CD4-positive, alpha-beta memory T cell (primary cell): ENCODE measurements at regions of chr7 and their contacts with region 1.

Region 1: DNA sequence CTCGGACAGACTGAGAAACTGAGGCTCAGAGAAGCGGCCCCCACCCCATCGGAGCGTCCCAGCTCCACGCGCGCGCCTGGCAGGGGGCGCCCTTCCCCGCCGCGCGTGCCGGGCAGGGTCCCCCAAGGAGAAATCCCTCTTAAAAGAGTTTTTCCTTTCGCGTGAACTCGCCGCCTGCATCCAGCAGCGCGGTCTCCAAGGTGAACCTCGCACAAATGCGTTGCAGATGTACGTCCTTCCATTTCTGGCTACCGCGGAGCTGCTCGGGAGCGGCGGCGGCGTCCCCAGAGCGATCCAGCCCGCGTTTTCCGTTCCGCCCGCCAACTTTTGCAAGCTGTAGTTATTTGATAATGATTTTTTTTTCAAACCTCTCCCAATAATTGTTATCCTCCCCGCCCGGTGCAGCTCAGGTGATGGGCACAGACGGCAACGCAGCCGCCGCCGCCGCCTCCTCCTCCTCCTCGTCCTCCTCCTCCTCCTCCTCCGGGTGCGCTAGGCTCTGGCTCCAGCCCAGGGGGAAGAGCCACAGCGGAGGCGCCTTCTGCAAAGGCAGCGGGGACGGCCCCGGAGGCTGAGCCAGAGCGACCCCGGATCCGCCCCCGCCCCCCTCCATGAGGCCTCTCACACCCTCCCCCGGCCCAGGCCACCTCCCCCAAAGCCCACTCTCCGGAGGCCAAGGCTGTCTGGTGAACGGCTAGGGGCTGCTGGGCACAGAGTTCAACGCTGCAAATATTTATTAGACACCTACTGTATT is 74.0 kb upstream of the CUX1 start:
- DNase-seq: peak; percentile 67 to 74 (median 70)
- H3K4me3 ChIP-seq: peak overlapping the region; percentile 17 to 49
- H3K4me3 Mint-ChIP-seq: peak overlapping the region; percentile 58 to 86 (median 80)
- H3K27ac ChIP-seq: no peak overlapping the region
- H3K27ac Mint-ChIP-seq: peak overlapping the region in 1 of 7 donors; percentile 70
- H3K4me1 ChIP-seq: peaks cover 14% of the 10 kb centered on the region
- H3K4me1 Mint-ChIP-seq: peaks cover 2 to 10% (median 6%) of the 10 kb centered on the region in 4 donors
- H3K27me3 ChIP-seq: no peaks in the 10 kb centered on the region
- H3K27me3 Mint-ChIP-seq: peaks cover 0 to 1% of the 10 kb centered on the region in 2 donors

Region 2: DNA sequence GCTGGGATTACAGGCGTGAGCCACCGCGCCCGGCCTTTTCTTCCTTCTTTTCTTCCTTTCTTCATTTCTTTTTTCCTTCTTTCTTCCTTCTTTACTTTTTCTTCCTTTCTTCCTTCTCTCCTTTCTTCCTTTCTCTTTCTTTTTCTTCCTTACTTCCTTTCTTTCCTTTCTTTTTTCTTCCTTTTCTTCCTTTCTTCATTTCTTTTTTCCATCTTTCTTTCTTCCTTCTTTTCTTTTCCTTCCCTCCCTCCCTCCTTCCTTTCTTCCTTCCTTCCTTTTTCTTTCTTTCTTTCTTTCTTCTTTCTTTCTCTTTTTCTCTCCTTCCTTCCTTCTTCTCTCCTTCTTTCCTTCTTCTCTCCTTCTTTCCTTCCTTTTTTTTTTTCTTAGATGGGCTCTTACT is 27.0 kb after region 1 on chr7:
- CTCF ChIA-PET with region 1: no interaction called
- POLR2A ChIA-PET with region 1: no interaction called
- intact Hi-C with region 1: no loop called
- DNase-seq: no peak
- H3K4me3 ChIP-seq: no peak overlapping the region
- H3K4me3 Mint-ChIP-seq: no peak overlapping the region
- H3K27ac ChIP-seq: no peak overlapping the region
- H3K27ac Mint-ChIP-seq: peak overlapping the region in 1 of 7 donors; percentile 37
- H3K4me1 ChIP-seq: no peaks in the 10 kb centered on the region
- H3K4me1 Mint-ChIP-seq: no peaks in the 10 kb centered on the region
- H3K27me3 ChIP-seq: no peaks in the 10 kb centered on the region
- H3K27me3 Mint-ChIP-seq: peaks cover 0 to 5% of the 10 kb centered on the region in 2 donors

Region 3: GRCh38 chr7:101783381-101784181 is 40.2 kb after region 1 on chr7:
- CTCF ChIA-PET with region 1: no interaction called
- POLR2A ChIA-PET with region 1: no interaction called
- intact Hi-C with region 1: no loop called
- DNase-seq: no peak
- H3K4me3 ChIP-seq: no peak overlapping the region
- H3K4me3 Mint-ChIP-seq: no peak overlapping the region
- H3K27ac ChIP-seq: no peak overlapping the region
- H3K27ac Mint-ChIP-seq: no peak overlapping the region
- H3K4me1 ChIP-seq: no peaks in the 10 kb centered on the region
- H3K4me1 Mint-ChIP-seq: peaks cover 0 to 3% (median under 1%) of the 10 kb centered on the region in 4 donors
- H3K27me3 ChIP-seq: no peaks in the 10 kb centered on the region
- H3K27me3 Mint-ChIP-seq: peaks cover 0 to 5% of the 10 kb centered on the region in 2 donors

Region 4: DNA sequence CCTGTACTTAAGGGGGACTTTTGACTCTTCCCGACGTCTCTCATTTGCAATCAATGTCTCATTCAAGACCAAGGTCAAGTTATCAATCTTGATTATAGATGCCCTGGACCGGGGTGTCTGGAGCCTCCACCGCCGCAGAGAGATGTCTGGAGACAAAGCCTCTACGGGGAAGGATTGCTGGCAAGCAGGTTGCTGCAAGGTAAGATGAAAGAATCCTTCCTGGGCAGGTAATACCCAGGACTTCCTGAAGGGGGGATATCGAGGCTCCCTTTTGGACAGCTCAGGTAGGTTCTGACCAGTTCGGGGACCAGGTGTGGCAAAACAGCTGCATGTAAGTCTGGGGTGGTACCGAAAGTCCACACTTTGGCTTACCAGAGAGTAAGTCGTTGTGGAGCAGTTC is 61.5 kb after region 1 on chr7:
- CTCF ChIA-PET with region 1: interaction called, 10 read pairs
- POLR2A ChIA-PET with region 1: interaction called, 3 read pairs
- intact Hi-C with region 1: no loop called
- DNase-seq: peak in 3 of 5 donors; percentile 11 to 15 (median 13)
- H3K4me3 ChIP-seq: no peak overlapping the region
- H3K4me3 Mint-ChIP-seq: peak overlapping the region in 7 of 8 donors; percentile 5 to 82 (median 65)
- H3K27ac ChIP-seq: no peak overlapping the region
- H3K27ac Mint-ChIP-seq: peak overlapping the region in 2 of 7 donors; percentile 11 to 59
- H3K4me1 ChIP-seq: peaks cover 17% of the 10 kb centered on the region
- H3K4me1 Mint-ChIP-seq: peaks cover 16 to 29% (median 23%) of the 10 kb centered on the region in 4 donors
- H3K27me3 ChIP-seq: no peaks in the 10 kb centered on the region
- H3K27me3 Mint-ChIP-seq: peaks cover 2 to 5% of the 10 kb centered on the region in 2 donors

Region 5: GRCh38 chr7:101815835-101816493 is 72.5 kb after region 1 on chr7:
- CTCF ChIA-PET with region 1: interaction called, 32 read pairs
- POLR2A ChIA-PET with region 1: interaction called, 18 read pairs
- intact Hi-C with region 1: loop called (anchors 1 kb)
- DNase-seq: peak; percentile 75 to 78 (median 76)
- H3K4me3 ChIP-seq: peak overlapping the region in 1 of 2 donors; percentile 43
- H3K4me3 Mint-ChIP-seq: peak overlapping the region; percentile 77 to 89 (median 86)
- H3K27ac ChIP-seq: no peak overlapping the region
- H3K27ac Mint-ChIP-seq: peak overlapping the region; percentile 66 to 89 (median 81)
- H3K4me1 ChIP-seq: peaks cover 20% of the 10 kb centered on the region
- H3K4me1 Mint-ChIP-seq: peaks cover 21 to 35% (median 27%) of the 10 kb centered on the region in 4 donors
- H3K27me3 ChIP-seq: no peaks in the 10 kb centered on the region
- H3K27me3 Mint-ChIP-seq: peaks cover 2% of the 10 kb centered on the region in 2 donors

Region 6: DNA sequence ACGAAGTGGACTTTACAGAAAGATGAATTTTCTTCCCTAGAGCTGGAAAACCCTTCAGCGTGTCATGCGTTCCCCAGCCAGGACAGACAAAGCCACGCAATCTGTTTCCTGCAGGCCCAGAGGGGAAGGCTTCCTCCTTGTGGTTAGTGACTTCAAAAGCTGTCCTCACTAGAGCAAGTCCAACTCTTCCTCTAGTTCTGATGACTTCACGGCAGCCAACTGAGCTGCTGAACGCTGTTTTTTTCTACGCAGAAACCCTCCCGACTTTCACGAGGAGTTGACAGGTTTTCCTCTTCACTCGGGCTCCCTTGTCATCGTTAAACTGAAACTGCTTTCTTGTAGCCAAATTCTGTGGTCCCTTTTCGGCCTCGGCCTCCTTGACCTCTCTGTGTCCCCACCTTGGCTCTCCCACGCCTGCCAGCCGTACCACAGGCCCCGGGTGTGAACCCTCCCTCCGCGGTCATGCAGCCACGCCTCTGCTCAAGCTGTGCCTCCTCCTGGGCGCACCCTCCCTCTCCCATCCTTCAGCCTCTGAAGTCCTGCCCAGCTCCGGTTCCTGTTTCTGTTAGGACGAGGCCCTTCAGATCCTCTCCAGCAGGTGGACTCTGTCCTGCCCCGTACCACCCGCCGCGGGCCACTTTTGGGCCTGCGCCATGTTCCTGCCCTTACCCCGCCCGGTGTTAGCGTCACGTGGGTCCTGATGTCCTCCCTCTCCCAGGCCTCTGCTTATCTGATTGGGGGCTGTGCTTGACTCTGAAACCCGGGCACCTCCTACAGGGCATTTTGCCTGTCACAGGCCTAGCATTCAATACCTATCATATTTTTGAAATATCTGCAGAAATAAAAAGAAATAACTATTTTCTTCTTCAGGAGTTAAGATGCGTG is 113.3 kb after region 1 on chr7:
- CTCF ChIA-PET with region 1: interaction called, 23 read pairs
- POLR2A ChIA-PET with region 1: interaction called, 3 read pairs
- intact Hi-C with region 1: loop called (anchors 2 kb)
- DNase-seq: peak; percentile 78 to 91 (median 80)
- H3K4me3 ChIP-seq: peak overlapping the region; percentile 44 to 61
- H3K4me3 Mint-ChIP-seq: peak overlapping the region; percentile 95 to 100 (median 97)
- H3K27ac ChIP-seq: peak overlapping the region; percentile 68
- H3K27ac Mint-ChIP-seq: peak overlapping the region; percentile 90 to 99 (median 97)
- H3K4me1 ChIP-seq: peaks cover 18% of the 10 kb centered on the region
- H3K4me1 Mint-ChIP-seq: peaks cover 22 to 47% (median 39%) of the 10 kb centered on the region in 4 donors
- H3K27me3 ChIP-seq: no peaks in the 10 kb centered on the region
- H3K27me3 Mint-ChIP-seq: no peaks in the 10 kb centered on the region